ENCODE measurements at regions of chr11 and their contacts with region 1.

Region 1: DNA sequence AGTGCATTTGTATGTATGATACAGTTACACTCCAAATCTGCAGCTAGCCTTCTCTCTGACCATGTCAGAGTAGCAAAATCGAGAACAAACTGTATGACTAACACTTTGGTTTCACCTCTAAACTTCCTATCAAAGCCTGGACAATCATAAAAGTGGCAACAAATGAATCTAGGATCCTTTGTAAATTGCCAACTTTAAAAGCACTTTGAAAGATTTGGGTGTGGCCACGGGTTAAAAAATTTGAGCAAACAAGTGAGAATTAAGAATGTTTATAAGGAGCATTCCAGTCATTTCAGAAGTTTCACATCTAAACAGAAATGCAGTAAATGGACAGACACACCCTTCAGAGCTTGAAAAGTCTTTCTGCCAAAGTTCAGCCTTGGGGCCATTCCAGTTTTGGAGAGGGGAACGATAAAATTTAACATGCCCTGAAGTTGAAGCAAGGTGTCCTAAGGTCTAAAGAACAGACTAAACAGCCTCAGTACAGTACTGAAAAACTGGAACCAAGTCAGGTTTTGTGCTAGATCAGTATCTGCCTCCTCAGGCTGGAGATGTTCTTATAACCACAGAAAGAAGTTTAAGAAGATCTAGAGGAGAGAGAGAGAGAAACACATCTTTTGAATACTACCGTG is 181.9 kb upstream of the BDNF start:
- DNase-seq: peak; percentile 59 to 62
- H3K4me3 ChIP-seq: no peak overlapping the region
- H3K4me3 Mint-ChIP-seq: peak overlapping the region; percentile 20
- H3K27ac Mint-ChIP-seq: peak overlapping the region; percentile 84
- H3K4me1 ChIP-seq: peaks cover 36% of the 10 kb centered on the region
- H3K4me1 Mint-ChIP-seq: peaks cover 21% of the 10 kb centered on the region
- H3K27me3 ChIP-seq: no peaks in the 10 kb centered on the region
- H3K27me3 Mint-ChIP-seq: no peaks in the 10 kb centered on the region
- CTCF ChIP-seq: no peak

Region 2: DNA sequence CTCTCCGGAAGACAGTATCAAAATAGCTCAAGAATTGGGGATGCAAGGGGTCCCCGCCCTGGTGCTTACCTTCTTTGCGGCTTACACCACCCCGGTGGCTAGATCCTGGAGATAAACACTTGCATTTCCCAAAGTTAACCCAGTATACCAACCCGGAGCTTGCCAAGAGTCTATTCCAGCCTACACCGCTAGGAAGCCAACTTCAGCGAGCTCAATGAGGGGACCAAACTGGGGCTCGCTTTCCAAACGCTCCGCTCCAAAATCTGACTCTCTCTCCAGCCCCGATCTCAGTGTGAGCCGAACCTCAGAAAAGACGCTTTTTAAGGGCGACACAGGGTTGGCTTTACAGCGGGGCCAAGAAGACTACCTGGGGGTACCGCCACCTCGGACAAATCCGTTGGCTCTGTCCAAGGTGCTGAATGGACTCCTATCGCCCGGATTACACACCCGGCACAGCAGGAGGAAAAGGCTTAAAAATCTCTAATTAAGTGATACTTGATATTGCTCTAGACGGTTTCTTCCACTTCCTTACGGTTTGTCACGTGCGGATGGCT is 161.8 kb before region 1 on chr11:
- CTCF ChIA-PET with region 1: no interaction called
- POLR2A ChIA-PET with region 1: interaction called, 4 read pairs
- intact Hi-C with region 1: loop called (anchors 1 kb)
- DNase-seq: peak; percentile 41 to 60
- H3K4me3 ChIP-seq: no peak overlapping the region
- H3K4me3 Mint-ChIP-seq: peak overlapping the region; percentile 90
- H3K27ac Mint-ChIP-seq: no peak overlapping the region
- H3K4me1 ChIP-seq: peaks cover 5% of the 10 kb centered on the region; the same call in 1 of the 2 replicates
- H3K4me1 Mint-ChIP-seq: peaks cover 7% of the 10 kb centered on the region
- H3K27me3 ChIP-seq: no peaks in the 10 kb centered on the region
- H3K27me3 Mint-ChIP-seq: no peaks in the 10 kb centered on the region
- CTCF ChIP-seq: no peak

Region 3: GRCh38 chr11:27839226-27839870 is 42.8 kb before region 1 on chr11:
- CTCF ChIA-PET with region 1: no interaction called
- POLR2A ChIA-PET with region 1: no interaction called
- intact Hi-C with region 1: loop called (anchors 1 kb)
- DNase-seq: peak in 1 of 2 experiments; percentile 9
- H3K4me3 ChIP-seq: no peak overlapping the region
- H3K4me3 Mint-ChIP-seq: no peak overlapping the region
- H3K27ac Mint-ChIP-seq: peak overlapping the region; percentile 3
- H3K4me1 ChIP-seq: no peaks in the 10 kb centered on the region
- H3K4me1 Mint-ChIP-seq: peaks cover 12% of the 10 kb centered on the region
- H3K27me3 ChIP-seq: no peaks in the 10 kb centered on the region
- H3K27me3 Mint-ChIP-seq: no peaks in the 10 kb centered on the region
- CTCF ChIP-seq: peak; percentile 12 to 39

Region 4: GRCh38 chr11:27868226-27868625 is 14.0 kb before region 1 on chr11:
- CTCF ChIA-PET with region 1: no interaction called
- POLR2A ChIA-PET with region 1: interaction called, 3 read pairs
- intact Hi-C with region 1: loop called (anchors 1 kb)
- DNase-seq: peak in 1 of 2 experiments; percentile 35
- H3K4me3 ChIP-seq: no peak overlapping the region
- H3K4me3 Mint-ChIP-seq: no peak overlapping the region
- H3K27ac Mint-ChIP-seq: peak overlapping the region; percentile 37
- H3K4me1 ChIP-seq: peaks cover 28% of the 10 kb centered on the region
- H3K4me1 Mint-ChIP-seq: peaks cover 36% of the 10 kb centered on the region
- H3K27me3 ChIP-seq: no peaks in the 10 kb centered on the region
- H3K27me3 Mint-ChIP-seq: no peaks in the 10 kb centered on the region
- CTCF ChIP-seq: no peak

Region 5: DNA sequence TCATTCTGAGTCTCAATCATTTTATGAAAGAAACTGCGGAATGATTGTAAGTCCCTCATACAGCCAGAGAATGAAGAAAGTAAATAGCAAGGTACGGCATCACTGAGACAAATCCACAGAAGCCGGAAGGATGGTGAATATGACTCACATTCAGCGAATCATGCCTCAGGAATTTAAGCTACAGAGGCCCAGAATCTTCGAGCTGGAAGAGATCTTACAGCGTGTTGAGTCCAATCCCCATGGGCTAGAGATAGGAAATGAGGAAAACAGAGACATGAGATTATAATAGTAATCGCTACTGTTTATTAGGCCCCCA is 52.6 kb after region 1 on chr11:
- CTCF ChIA-PET with region 1: no interaction called
- POLR2A ChIA-PET with region 1: no interaction called
- intact Hi-C with region 1: no loop called
- DNase-seq: peak in 1 of 2 experiments; percentile 32
- H3K4me3 ChIP-seq: no peak overlapping the region
- H3K4me3 Mint-ChIP-seq: no peak overlapping the region
- H3K27ac Mint-ChIP-seq: peak overlapping the region; percentile 11
- H3K4me1 ChIP-seq: peaks cover 11% of the 10 kb centered on the region
- H3K4me1 Mint-ChIP-seq: no peaks in the 10 kb centered on the region
- H3K27me3 ChIP-seq: no peaks in the 10 kb centered on the region
- H3K27me3 Mint-ChIP-seq: no peaks in the 10 kb centered on the region
- CTCF ChIP-seq: no peak

Region 6: DNA sequence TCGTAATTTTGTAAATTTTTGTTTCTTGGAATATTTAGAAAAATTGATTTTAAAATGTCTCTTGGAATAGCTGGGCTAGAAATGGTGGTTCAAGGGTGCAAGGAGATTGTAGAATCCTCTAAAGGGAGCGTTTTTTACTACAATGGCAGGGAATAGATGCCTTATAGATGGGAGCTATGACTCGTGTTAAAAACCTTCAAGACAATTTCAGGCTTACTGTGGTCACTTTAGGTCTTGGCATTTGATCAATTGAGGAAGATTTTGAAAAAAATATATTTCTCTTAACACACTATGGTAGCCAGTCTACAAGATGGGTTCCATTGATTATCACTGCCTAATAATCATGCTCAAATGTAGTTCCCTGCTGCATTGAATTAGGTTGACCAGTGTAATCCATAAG is 251.0 kb after region 1 on chr11:
- CTCF ChIA-PET with region 1: no interaction called
- POLR2A ChIA-PET with region 1: no interaction called
- intact Hi-C with region 1: no loop called
- DNase-seq: no peak
- H3K4me3 ChIP-seq: no peak overlapping the region
- H3K4me3 Mint-ChIP-seq: no peak overlapping the region
- H3K27ac Mint-ChIP-seq: no peak overlapping the region
- H3K4me1 ChIP-seq: no peaks in the 10 kb centered on the region
- H3K4me1 Mint-ChIP-seq: no peaks in the 10 kb centered on the region
- H3K27me3 ChIP-seq: no peaks in the 10 kb centered on the region
- H3K27me3 Mint-ChIP-seq: no peaks in the 10 kb centered on the region
- CTCF ChIP-seq: no peak

Region 7: GRCh38 chr11:28529540-28530410 is 647.6 kb after region 1 on chr11:
- CTCF ChIA-PET with region 1: no interaction called
- POLR2A ChIA-PET with region 1: no interaction called
- intact Hi-C with region 1: no loop called
- DNase-seq: peak in 1 of 2 experiments; percentile 45
- H3K4me3 ChIP-seq: no peak overlapping the region
- H3K4me3 Mint-ChIP-seq: no peak overlapping the region
- H3K27ac Mint-ChIP-seq: no peak overlapping the region
- H3K4me1 ChIP-seq: no peaks in the 10 kb centered on the region
- H3K4me1 Mint-ChIP-seq: no peaks in the 10 kb centered on the region
- H3K27me3 ChIP-seq: no peaks in the 10 kb centered on the region
- H3K27me3 Mint-ChIP-seq: no peaks in the 10 kb centered on the region
- CTCF ChIP-seq: peak; percentile 39 to 47

Region 8: GRCh38 chr11:28697920-28698827 is 816.0 kb after region 1 on chr11:
- CTCF ChIA-PET with region 1: no interaction called
- POLR2A ChIA-PET with region 1: no interaction called
- intact Hi-C with region 1: loop called (anchors 10 kb)
- DNase-seq: peak; percentile 63 to 77
- H3K4me3 ChIP-seq: no peak overlapping the region
- H3K4me3 Mint-ChIP-seq: no peak overlapping the region
- H3K27ac Mint-ChIP-seq: peak overlapping the region; percentile 7
- H3K4me1 ChIP-seq: peaks cover 3% of the 10 kb centered on the region; the same call in 1 of the 2 replicates
- H3K4me1 Mint-ChIP-seq: peaks cover 23% of the 10 kb centered on the region
- H3K27me3 ChIP-seq: no peaks in the 10 kb centered on the region
- H3K27me3 Mint-ChIP-seq: no peaks in the 10 kb centered on the region
- CTCF ChIP-seq: peak; percentile 84 to 90

Measured in Caco-2 (cell line).